Psoas muscle (tissue), 8 donors: ENCODE measurements at regions of chr2 and their contacts with region 1.

Region 1: GRCh38 chr2:64144057-64145013 is at the start of gene PELI1:
- DNase-seq: peak; percentile 96 to 97
- ATAC-seq: peak; percentile 99 to 100 (median 100)
- H3K4me3 ChIP-seq: peak within 1 kb of the TSS; percentile 96
- H3K27ac ChIP-seq: peak within 1 kb of the TSS; percentile 94
- H3K4me1 ChIP-seq: peaks cover 4% of the 10 kb centered on the region
- H3K27me3 ChIP-seq: no peaks in the 10 kb centered on the region
- CTCF ChIP-seq: peak; percentile 13
- total RNA-seq, gene PELI1: 5.7 to 7.6 (median 6.9) TPM

Region 2: DNA sequence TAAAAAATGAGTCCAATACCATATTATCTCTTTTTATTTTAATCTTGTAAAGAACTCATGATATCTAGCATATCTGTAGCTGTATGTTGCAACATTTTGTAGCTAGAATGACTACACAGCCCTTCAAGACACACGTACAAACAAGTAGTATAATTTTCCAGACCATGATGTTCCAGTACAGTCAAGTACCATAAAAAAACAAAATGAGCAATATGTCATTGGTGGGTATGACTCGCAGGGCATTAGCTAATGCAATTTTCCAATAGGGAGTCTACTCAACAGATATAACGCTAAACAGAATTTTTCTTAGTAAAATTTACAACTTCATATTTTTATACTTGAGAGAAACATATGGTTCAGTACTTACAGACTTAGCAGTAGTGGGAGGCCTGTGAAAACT is 356.3 kb before region 1 on chr2:
- intact Hi-C with region 1: no loop called
- DNase-seq: no peak
- ATAC-seq: peak in 3 of 4 donors; percentile 58 to 82 (median 72)
- H3K4me3 ChIP-seq: no peak overlapping the region
- H3K27ac ChIP-seq: no peak overlapping the region
- H3K4me1 ChIP-seq: peaks cover 29% of the 10 kb centered on the region
- H3K27me3 ChIP-seq: no peaks in the 10 kb centered on the region
- CTCF ChIP-seq: no peak

Region 3: GRCh38 chr2:64021641-64022042 is 122.7 kb before region 1 on chr2:
- intact Hi-C with region 1: no loop called
- DNase-seq: no peak
- ATAC-seq: no peak
- H3K4me3 ChIP-seq: no peak overlapping the region
- H3K27ac ChIP-seq: peak overlapping the region; percentile 26
- H3K4me1 ChIP-seq: peaks cover 9% of the 10 kb centered on the region
- H3K27me3 ChIP-seq: no peaks in the 10 kb centered on the region
- CTCF ChIP-seq: no peak

Region 4: GRCh38 chr2:64052468-64053241 is 91.7 kb before region 1 on chr2:
- intact Hi-C with region 1: loop called in 1 of 2 experiments (anchors 5 kb)
- DNase-seq: no peak
- ATAC-seq: no peak
- H3K4me3 ChIP-seq: no peak overlapping the region
- H3K27ac ChIP-seq: peak overlapping the region; percentile 46
- H3K4me1 ChIP-seq: no peaks in the 10 kb centered on the region
- H3K27me3 ChIP-seq: no peaks in the 10 kb centered on the region
- CTCF ChIP-seq: no peak

Region 5: DNA sequence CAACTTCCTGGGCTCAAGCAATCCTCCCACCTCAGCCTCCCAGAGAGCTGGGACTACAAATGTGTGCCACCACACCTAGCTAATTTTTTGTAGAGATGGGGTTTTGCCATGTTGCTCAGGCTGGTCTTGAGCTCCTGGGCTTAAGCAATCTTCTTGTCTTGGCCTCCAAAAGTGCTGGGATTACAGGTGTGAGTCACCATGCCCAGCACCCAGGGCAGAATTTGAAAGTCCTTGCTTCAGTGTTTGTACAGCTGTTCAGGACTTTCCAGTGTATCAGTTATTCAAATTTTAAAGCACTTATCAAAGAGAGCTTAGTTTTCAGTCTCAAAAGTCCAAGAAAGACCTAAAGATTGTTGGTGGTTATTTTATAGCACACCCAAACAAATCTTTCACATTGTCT is 81.5 kb before region 1 on chr2:
- intact Hi-C with region 1: no loop called
- DNase-seq: no peak
- ATAC-seq: no peak
- H3K4me3 ChIP-seq: no peak overlapping the region
- H3K27ac ChIP-seq: no peak overlapping the region
- H3K4me1 ChIP-seq: no peaks in the 10 kb centered on the region
- H3K27me3 ChIP-seq: no peaks in the 10 kb centered on the region
- CTCF ChIP-seq: no peak

Region 6: DNA sequence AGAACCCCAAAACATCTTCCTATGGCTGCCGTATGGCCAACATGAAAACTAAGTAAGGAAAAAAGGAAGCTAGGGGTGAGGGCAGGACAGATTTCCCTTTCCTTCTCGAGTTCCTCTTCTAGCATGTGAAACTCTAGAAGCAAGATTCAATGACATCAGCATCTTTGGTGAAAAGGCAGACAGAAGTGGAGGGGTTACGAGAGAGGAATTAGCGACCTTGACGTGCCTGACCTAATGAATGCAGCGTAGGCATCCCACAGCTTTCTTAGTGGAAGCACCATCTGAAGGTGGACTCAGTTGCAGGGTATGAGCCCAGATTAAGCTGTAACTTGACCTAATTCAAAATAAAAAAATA is 47.8 kb after region 1 on chr2:
- intact Hi-C with region 1: no loop called
- DNase-seq: no peak
- ATAC-seq: peak in 2 of 4 donors; percentile 37 to 40
- H3K4me3 ChIP-seq: no peak overlapping the region
- H3K27ac ChIP-seq: no peak overlapping the region
- H3K4me1 ChIP-seq: no peaks in the 10 kb centered on the region
- H3K27me3 ChIP-seq: no peaks in the 10 kb centered on the region
- CTCF ChIP-seq: no peak

Region 7: GRCh38 chr2:64214281-64215115 is 70.2 kb after region 1 on chr2:
- intact Hi-C with region 1: loop called in 1 of 2 experiments (anchors 5 kb)
- DNase-seq: no peak
- ATAC-seq: peak in 2 of 4 donors; percentile 58 to 61
- H3K4me3 ChIP-seq: no peak overlapping the region
- H3K27ac ChIP-seq: no peak overlapping the region
- H3K4me1 ChIP-seq: peaks cover 19% of the 10 kb centered on the region
- H3K27me3 ChIP-seq: no peaks in the 10 kb centered on the region
- CTCF ChIP-seq: no peak

Region 8: GRCh38 chr2:64311948-64312621 is 167.8 kb after region 1 on chr2:
- intact Hi-C with region 1: loop called in 1 of 2 experiments (anchors 5 kb)
- DNase-seq: peak; percentile 70 to 78
- ATAC-seq: peak; percentile 94 to 99 (median 96)
- H3K4me3 ChIP-seq: peak overlapping the region; percentile 29
- H3K27ac ChIP-seq: no peak overlapping the region
- H3K4me1 ChIP-seq: peaks cover 9% of the 10 kb centered on the region
- H3K27me3 ChIP-seq: no peaks in the 10 kb centered on the region
- CTCF ChIP-seq: peak; percentile 51